ENCODE measurements at regions of chr20 and their contacts with region 1.

Region 1: GRCh38 chr20:38893565-38894090 is 32.6 kb upstream of the FAM83D start:
- DNase-seq: peak; percentile 39
- ATAC-seq: peak; percentile 93
- H3K4me3 ChIP-seq: no peak overlapping the region
- H3K27ac ChIP-seq: no peak overlapping the region
- H3K4me1 ChIP-seq: no peaks in the 10 kb centered on the region
- H3K27me3 ChIP-seq: peaks cover 12% of the 10 kb centered on the region
- CTCF ChIP-seq: peak; percentile 98

Region 2: DNA sequence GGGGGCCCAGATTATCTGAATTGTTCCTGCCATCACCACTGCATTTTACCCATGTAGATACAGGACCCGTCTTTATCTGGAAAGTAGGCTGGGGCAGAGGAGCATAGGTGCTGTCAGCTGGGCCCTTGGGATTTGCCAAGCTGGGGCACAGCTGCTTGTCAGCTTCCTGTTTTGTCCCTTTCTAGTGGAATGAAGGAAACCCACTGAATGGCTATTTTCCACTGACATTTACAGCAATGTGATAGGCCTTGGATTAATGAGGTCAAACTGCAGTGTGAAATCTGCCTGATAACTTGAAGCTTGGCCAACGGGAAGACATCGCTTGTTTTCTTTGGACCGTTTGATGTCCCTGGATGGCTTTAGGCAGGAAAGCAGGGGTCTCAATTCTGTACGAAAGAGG is 81.4 kb before region 1 on chr20:
- CTCF ChIA-PET with region 1: interaction called, 10 read pairs
- POLR2A ChIA-PET with region 1: interaction called, 3 read pairs
- in situ Hi-C with region 1: no loop called
- intact Hi-C with region 1: no loop called
- DNase-seq: no peak
- ATAC-seq: no peak
- H3K4me3 ChIP-seq: no peak overlapping the region
- H3K27ac ChIP-seq: no peak overlapping the region
- H3K4me1 ChIP-seq: no peaks in the 10 kb centered on the region
- H3K27me3 ChIP-seq: peaks cover 20% of the 10 kb centered on the region
- CTCF ChIP-seq: no peak